Activated T-helper 2 cell treated with anti-CD3 and anti-CD28 coated beads, Interferon-gamma antibody, Interleukin-2, Interleukin-4, amounts not matched to agents 10 μg/mL and 5 μg/mL and 100 μg/mL, durations not matched to agents 14 hours and 24 hours and 36 hours (primary cell): ENCODE measurements at regions of chr3 and their contacts with region 1.

Region 1: DNA sequence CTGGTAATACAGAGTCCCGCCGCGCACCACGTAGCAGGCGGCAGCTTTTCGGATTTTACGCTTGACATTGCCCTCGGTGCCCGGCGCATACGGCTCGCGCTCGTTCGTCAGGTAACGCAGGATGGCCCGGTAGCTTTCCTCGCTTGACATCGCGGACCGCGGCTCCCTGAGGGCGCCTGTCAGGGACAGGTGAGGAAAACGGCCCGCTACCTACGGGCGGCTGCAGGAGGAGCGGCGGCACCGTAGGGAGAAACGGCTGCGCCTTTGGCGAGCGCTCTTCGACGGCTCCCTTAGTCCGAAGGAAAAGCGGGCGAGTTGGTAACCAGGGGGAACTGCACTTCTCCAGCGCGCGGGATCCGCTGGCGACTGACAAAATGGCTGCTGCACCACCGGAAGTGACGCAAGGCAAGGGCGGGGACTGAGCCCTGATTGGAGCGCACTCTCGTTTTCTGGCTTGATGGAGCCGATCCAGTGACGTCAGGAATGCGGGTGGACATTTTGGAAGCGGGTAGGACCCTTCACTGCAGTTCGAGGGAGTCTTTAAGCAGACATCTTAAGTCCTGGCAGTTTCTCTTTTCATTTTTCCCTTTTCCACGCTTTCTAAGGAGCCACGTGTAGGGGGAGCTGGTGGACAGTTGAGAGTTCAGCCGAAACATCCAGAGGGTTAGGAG is at the start of gene ZBTB11:
- DNase-seq: peak; percentile 99
- H3K4me3 Mint-ChIP-seq: peak within 1 kb of the TSS; percentile 94
- H3K27ac Mint-ChIP-seq: peak within 1 kb of the TSS; percentile 94
- H3K4me1 Mint-ChIP-seq: peaks cover 46% of the 10 kb centered on the region
- H3K27me3 Mint-ChIP-seq: no peaks in the 10 kb centered on the region
- total RNA-seq, gene ZBTB11: 27.5 and 29.6 TPM in 2 replicates

Region 2: DNA sequence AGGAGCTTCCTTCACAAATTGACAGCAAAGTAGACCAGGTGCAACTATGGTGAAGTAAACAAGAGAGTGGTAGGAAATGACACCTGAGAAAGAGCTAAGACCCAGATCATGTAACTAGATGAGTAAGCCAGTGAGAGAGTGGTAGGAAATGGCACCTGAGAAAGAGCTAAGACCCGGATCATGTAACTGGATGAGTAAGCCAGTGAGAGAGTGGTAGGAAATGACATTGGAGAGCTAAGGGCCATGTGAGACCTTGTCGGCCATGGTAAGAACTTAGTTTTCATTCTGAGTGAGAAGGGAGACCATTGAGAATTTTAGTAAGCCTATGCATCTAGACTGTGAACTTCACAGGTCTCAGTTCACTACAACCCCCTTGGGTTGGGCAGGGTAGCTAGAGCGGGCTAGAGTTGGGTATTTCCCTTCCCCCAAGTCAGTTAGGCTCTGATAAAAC is 158.5 kb before region 1 on chr3:
- intact Hi-C with region 1: loop called (anchors 5 kb)
- DNase-seq: peak; percentile 55
- H3K4me3 Mint-ChIP-seq: peak overlapping the region; percentile 53
- H3K27ac Mint-ChIP-seq: peak overlapping the region; percentile 85
- H3K4me1 Mint-ChIP-seq: peaks cover 39% of the 10 kb centered on the region
- H3K27me3 Mint-ChIP-seq: no peaks in the 10 kb centered on the region

Region 3: GRCh38 chr3:101561630-101562328 is 115.1 kb before region 1 on chr3 and contains the start of gene TRMT10C:
- intact Hi-C with region 1: loop called (anchors 2 kb)
- DNase-seq: peak; percentile 89
- H3K4me3 Mint-ChIP-seq: peak within 1 kb of the TSS; percentile 97
- H3K27ac Mint-ChIP-seq: peak within 1 kb of the TSS; percentile 97
- H3K4me1 Mint-ChIP-seq: peaks cover 26% of the 10 kb centered on the region
- H3K27me3 Mint-ChIP-seq: peaks cover 1% of the 10 kb centered on the region
- total RNA-seq, gene TRMT10C: 47.1 and 54.0 TPM in 2 replicates

Region 4: GRCh38 chr3:101573449-101574387 is 103.2 kb before region 1 on chr3 and contains the start of gene PCNP:
- intact Hi-C with region 1: loop called (anchors 1 kb)
- DNase-seq: peak; percentile 99
- H3K4me3 Mint-ChIP-seq: peak within 1 kb of the TSS; percentile 96
- H3K27ac Mint-ChIP-seq: peak within 1 kb of the TSS; percentile 99
- H3K4me1 Mint-ChIP-seq: peaks cover 56% of the 10 kb centered on the region
- H3K27me3 Mint-ChIP-seq: no peaks in the 10 kb centered on the region
- total RNA-seq, gene PCNP: 190 and 192 TPM in 2 replicates

Region 5: GRCh38 chr3:101643861-101644613 is 32.9 kb before region 1 on chr3:
- intact Hi-C with region 1: loop called (anchors 5 kb)
- DNase-seq: peak; percentile 29
- H3K4me3 Mint-ChIP-seq: peak overlapping the region; percentile 5
- H3K27ac Mint-ChIP-seq: peak overlapping the region; percentile 78
- H3K4me1 Mint-ChIP-seq: peaks cover 24% of the 10 kb centered on the region
- H3K27me3 Mint-ChIP-seq: no peaks in the 10 kb centered on the region